Stomach (tissue), 19 donors: ENCODE measurements at regions of chr1 and their contacts with region 1.

Region 1: DNA sequence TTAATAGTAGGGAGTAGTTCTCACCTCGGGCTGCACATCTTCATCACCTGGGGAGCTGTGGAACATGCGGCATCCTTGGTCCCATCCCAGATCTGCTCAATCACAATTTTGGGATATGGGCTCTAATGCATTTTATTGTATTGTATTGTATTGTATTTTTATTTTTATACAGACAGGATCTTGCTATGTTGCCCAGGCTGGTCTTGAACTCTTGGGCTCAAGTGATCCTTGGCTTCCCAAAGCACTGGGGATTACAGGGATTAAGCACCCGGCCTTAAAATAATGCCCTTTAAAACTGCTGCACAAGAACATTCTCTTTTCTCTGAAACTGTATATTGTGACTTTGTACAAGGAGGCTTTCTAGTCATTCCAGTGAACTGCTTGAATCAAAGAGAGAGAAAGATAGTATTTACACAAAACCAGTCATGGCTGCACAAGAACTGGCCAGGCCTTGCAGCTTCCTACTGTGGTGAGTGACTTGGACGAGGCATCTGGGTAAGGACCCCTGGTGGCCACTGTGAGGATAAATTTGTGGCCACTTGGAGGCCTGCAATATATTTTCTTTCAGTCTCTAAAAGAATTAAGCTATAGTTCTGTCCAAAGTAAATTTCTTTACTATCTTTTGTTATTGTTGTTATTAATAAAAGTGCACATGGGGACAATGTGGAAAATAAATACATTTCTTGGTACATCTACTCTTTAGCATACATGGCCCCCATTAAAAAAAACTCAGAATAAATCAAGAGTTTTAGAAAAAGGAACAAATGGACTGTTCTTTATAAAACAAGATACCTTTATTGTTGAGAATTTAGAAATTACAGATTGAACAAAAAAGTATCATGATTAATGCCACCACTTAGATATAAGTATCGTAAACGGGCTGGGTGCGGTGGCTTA is 48.0 kb downstream of the TBCE start:
- DNase-seq: peak; percentile 78 to 87
- H3K4me3 ChIP-seq: no peak overlapping the region
- H3K27ac ChIP-seq: no peak overlapping the region
- H3K4me1 ChIP-seq: peaks cover 0 to 19% (median 9%) of the 10 kb centered on the region in 4 donors
- H3K27me3 ChIP-seq: no peaks in the 10 kb centered on the region
- CTCF ChIP-seq: peak in 5 of 7 experiments; percentile 55 to 88 (median 75)
- EP300 ChIP-seq: no peak
- POLR2A ChIP-seq: no peak

Region 2: GRCh38 chr1:234997201-234997895 is 417.9 kb before region 1 on chr1:
- intact Hi-C with region 1: no loop called
- DNase-seq: peak; percentile 93 to 95
- H3K4me3 ChIP-seq: no peak overlapping the region
- H3K27ac ChIP-seq: peak overlapping the region; percentile 43 to 96 (median 91)
- H3K4me1 ChIP-seq: peaks cover 22 to 39% (median 27%) of the 10 kb centered on the region in 4 donors
- H3K27me3 ChIP-seq: no peaks in the 10 kb centered on the region
- CTCF ChIP-seq: no peak
- EP300 ChIP-seq: peak; percentile 99
- POLR2A ChIP-seq: no peak

Region 3: GRCh38 chr1:235105051-235106043 is 309.9 kb before region 1 on chr1:
- intact Hi-C with region 1: loop called (anchors 10 kb)
- DNase-seq: no peak
- H3K4me3 ChIP-seq: peak overlapping the region in 2 of 4 donors; percentile 1 to 40
- H3K27ac ChIP-seq: peak overlapping the region in 1 of 5 donors; percentile 34
- H3K4me1 ChIP-seq: peaks cover 9 to 15% (median 10%) of the 10 kb centered on the region in 4 donors
- H3K27me3 ChIP-seq: no peaks in the 10 kb centered on the region
- CTCF ChIP-seq: no peak
- EP300 ChIP-seq: no peak
- POLR2A ChIP-seq: no peak

Region 4: GRCh38 chr1:235253219-235253962 is 161.9 kb before region 1 on chr1:
- intact Hi-C with region 1: loop called (anchors 10 kb)
- DNase-seq: peak; percentile 65 to 87
- H3K4me3 ChIP-seq: no peak overlapping the region
- H3K27ac ChIP-seq: no peak overlapping the region
- H3K4me1 ChIP-seq: peaks cover 4 to 62% (median 37%) of the 10 kb centered on the region in 4 donors
- H3K27me3 ChIP-seq: no peaks in the 10 kb centered on the region
- CTCF ChIP-seq: peak in 5 of 7 experiments; percentile 47 to 81 (median 77)
- EP300 ChIP-seq: no peak
- POLR2A ChIP-seq: no peak